Aorta (tissue), 5 donors: ENCODE measurements at regions of chr15 and their contacts with region 1.

Region 1: DNA sequence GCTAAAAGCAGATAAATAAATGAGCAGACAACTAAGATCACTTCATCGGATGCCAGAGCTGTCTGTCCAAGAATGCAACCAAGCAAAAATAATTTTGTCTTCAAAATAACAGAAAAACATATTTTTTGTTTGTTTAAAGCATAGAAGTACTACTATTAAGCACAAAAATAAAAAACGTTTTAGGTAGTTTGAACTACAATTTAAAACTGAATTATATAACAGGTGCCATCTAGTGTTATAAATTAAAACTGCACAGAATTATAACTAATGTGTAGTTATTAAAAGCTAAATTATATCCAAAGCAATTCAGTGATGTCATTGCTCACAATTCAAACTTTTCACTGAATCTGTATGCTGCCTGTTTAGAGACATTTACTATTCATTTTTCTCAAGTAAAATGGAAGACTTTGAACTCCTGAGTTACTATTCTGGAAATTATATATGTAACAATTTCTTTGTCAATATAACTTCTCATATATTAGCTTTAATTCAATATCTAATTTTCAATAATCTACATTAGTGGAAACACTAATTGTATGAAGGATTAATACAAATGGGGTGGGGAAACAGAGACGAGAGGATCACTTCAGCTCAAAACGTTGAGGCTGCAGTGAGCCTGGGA is 29.5 kb downstream of the LINS1 start:
- DNase-seq: no peak
- ATAC-seq: no peak
- H3K4me3 ChIP-seq: no peak overlapping the region
- H3K27ac ChIP-seq: no peak overlapping the region
- H3K4me1 ChIP-seq: no peaks in the 10 kb centered on the region
- H3K27me3 ChIP-seq: no peaks in the 10 kb centered on the region

Region 2: DNA sequence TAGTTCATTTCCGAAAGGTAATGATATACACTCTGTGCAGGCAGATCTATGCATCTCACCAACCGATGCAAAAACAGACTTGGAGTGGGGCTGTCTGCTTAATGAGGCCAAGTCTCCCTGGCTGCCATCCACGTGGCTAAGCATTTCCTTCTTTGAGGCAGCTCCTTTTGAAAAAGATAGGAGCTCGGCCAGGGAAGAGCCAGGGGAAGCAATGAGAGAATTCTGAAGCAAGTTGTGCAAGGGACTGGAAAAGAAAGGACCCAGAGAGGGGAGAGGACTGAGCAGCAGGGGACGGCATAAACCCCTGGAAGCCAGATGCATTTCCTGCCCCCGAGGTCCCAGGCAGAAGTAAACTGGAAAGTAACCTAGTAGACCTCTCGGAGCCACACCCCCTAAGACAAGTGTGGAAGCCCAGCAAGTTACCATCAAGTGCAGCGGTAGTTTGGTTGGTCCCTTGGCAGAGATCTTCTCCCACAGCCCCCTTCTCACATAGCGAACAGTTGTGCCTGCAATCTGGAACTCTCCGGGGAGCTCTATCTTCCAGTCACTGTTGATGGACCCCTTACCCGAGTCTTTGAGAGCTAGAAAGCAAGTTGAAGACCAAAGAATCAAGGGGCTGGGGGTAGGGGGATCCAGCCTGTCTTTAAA is 518.9 kb before region 1 on chr15:
- intact Hi-C with region 1: no loop called
- DNase-seq: no peak
- ATAC-seq: no peak
- H3K4me3 ChIP-seq: no peak overlapping the region
- H3K27ac ChIP-seq: no peak overlapping the region
- H3K4me1 ChIP-seq: no peaks in the 10 kb centered on the region
- H3K27me3 ChIP-seq: no peaks in the 10 kb centered on the region

Region 3: GRCh38 chr15:100349696-100350433 is 222.6 kb before region 1 on chr15:
- intact Hi-C with region 1: loop called (anchors 1 to 5 kb)
- DNase-seq: peak; percentile 96 to 98
- ATAC-seq: peak; percentile 99
- H3K4me3 ChIP-seq: peak overlapping the region; percentile 47 to 81
- H3K27ac ChIP-seq: peak overlapping the region; percentile 65 to 96
- H3K4me1 ChIP-seq: no peaks in the 10 kb centered on the region
- H3K27me3 ChIP-seq: peaks cover 0 to 2% of the 10 kb centered on the region in 2 donors